ENCODE measurements at regions of chr20 and their contacts with region 1.

Region 1: GRCh38 chr20:23794841-23795240 is 31.7 kb downstream of the CST2 start:
- DNase-seq: peak in 1 of 2 experiments; percentile 43
- H3K4me3 ChIP-seq: no peak overlapping the region
- H3K27ac ChIP-seq: peak overlapping the region; percentile 86
- H3K4me1 ChIP-seq: peaks cover 28% of the 10 kb centered on the region
- H3K27me3 ChIP-seq: no peaks in the 10 kb centered on the region
- CTCF ChIP-seq: no peak

Region 2: DNA sequence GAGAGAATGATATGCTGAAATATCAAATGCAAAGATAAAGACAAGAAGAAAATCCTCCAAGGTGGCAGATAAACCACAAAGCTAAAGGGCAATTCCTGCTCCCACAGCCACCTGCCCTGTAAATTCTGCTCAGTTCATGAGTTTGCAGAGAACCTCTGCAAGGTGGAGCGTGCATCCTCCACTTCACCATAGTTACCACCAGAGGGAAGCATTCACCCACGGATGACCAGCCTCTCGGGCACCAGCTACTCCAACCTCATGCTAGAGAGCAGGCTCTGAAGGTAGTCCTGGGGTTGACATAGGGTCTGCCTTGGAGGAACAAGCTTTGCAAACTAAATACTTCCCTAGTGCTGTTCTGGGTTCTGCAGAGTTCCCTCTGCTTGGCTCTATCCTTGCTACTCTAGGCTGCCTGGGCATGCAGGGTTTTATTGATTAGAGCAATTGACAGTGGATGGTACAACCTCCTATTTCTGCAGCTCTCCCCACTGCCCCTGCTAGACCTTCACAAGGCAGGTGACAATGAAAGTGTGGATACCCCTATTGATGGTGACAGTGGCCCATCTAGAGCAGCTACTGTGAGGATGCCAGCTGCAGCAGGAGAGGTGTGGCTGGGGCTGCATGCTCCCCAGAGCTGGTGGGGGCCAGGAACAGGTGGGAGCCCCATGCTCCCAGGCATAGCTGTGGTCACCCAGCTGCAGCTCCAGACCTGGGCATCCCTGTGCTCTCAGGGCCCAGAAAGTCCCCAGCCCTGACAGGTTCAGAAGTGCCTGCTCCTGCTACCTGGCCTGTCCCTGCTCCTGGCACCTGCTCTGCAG is 142.7 kb after region 1 on chr20:
- CTCF ChIA-PET with region 1: no interaction called
- POLR2A ChIA-PET with region 1: no interaction called
- intact Hi-C with region 1: loop called (anchors 5 kb)
- DNase-seq: peak; percentile 60 to 75
- H3K4me3 ChIP-seq: no peak overlapping the region
- H3K27ac ChIP-seq: no peak overlapping the region
- H3K4me1 ChIP-seq: no peaks in the 10 kb centered on the region
- H3K27me3 ChIP-seq: no peaks in the 10 kb centered on the region
- CTCF ChIP-seq: peak; percentile 92

Measured in PC-9 (cell line).